CD8-positive, alpha-beta memory T cell (primary cell): ENCODE measurements at regions of chr11 and their contacts with region 1.

Region 1: DNA sequence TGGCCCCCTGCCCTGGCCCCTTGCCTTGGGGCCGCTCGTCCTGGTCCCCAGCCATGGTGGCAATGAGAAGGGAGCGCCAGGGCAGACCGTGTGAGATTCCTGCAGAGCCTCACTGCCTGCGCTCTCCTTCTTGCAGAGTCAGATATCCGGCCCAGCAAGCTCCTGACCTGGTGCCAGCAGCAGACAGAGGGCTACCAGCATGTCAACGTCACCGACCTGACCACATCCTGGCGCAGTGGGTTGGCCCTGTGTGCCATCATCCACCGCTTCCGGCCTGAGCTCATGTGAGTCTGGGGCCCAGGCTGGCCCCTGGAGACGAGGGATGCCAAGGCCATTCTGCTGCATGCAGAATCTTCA is 114.1 kb downstream of the MICAL2 start:
- DNase-seq: peak; percentile 84 to 96 (median 86)
- H3K4me3 ChIP-seq: peak overlapping the region; percentile 28
- H3K4me3 Mint-ChIP-seq: peak overlapping the region; percentile 74 to 89 (median 81)
- H3K27ac ChIP-seq: peak overlapping the region; percentile 72
- H3K27ac Mint-ChIP-seq: peak overlapping the region; percentile 94 to 100 (median 98)
- H3K4me1 ChIP-seq: peaks cover 47% of the 10 kb centered on the region
- H3K4me1 Mint-ChIP-seq: peaks cover 47 to 61% (median 53%) of the 10 kb centered on the region in 3 donors
- H3K27me3 ChIP-seq: no peaks in the 10 kb centered on the region
- H3K27me3 Mint-ChIP-seq: peaks cover 0 to 5% of the 10 kb centered on the region in 2 donors

Region 2: DNA sequence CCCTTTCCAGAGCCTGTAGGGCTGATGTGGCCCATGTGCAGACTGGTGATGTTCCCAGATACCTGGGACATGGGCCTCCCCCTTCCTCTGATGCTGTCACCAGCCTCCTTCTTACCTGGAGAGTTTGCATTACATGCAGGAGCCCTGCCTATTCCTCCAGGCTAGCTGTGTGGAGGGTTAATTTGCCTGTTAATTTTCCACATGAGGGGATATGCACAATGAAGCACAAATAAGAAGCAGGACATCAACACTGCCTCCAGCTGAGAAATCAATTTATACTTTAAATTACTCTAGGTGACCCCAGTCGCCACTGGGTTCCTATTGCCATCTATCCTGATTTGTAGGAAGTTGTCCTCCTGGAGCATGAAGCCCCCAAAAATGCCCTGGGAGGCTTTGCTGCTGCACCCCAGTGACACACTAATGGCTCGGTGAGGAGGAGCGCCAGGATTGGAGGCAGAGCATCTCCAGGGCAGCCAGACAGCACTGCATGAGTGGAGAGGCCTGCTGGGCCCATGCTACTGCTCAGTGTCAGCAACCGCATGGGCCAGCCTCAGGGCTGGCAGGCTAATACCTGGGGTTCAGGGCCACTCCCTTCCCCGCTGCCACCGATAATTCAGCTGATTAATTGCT is 484.3 kb before region 1 on chr11:
- CTCF ChIA-PET with region 1: no interaction called
- POLR2A ChIA-PET with region 1: no interaction called
- DNase-seq: no peak
- H3K4me3 ChIP-seq: no peak overlapping the region
- H3K4me3 Mint-ChIP-seq: no peak overlapping the region
- H3K27ac ChIP-seq: no peak overlapping the region
- H3K27ac Mint-ChIP-seq: no peak overlapping the region
- H3K4me1 ChIP-seq: no peaks in the 10 kb centered on the region
- H3K4me1 Mint-ChIP-seq: no peaks in the 10 kb centered on the region
- H3K27me3 ChIP-seq: no peaks in the 10 kb centered on the region
- H3K27me3 Mint-ChIP-seq: peaks cover 10 to 56% of the 10 kb centered on the region in 2 donors

Region 3: GRCh38 chr11:12066799-12067508 is 157.6 kb before region 1 on chr11:
- CTCF ChIA-PET with region 1: no interaction called
- POLR2A ChIA-PET with region 1: no interaction called
- DNase-seq: no peak
- H3K4me3 ChIP-seq: no peak overlapping the region
- H3K4me3 Mint-ChIP-seq: no peak overlapping the region
- H3K27ac ChIP-seq: no peak overlapping the region
- H3K27ac Mint-ChIP-seq: peak overlapping the region in 1 of 8 donors; percentile 77
- H3K4me1 ChIP-seq: no peaks in the 10 kb centered on the region
- H3K4me1 Mint-ChIP-seq: peaks cover 17 to 23% (median 20%) of the 10 kb centered on the region in 3 donors
- H3K27me3 ChIP-seq: no peaks in the 10 kb centered on the region
- H3K27me3 Mint-ChIP-seq: peaks cover 4 to 5% of the 10 kb centered on the region in 2 donors

Region 4: DNA sequence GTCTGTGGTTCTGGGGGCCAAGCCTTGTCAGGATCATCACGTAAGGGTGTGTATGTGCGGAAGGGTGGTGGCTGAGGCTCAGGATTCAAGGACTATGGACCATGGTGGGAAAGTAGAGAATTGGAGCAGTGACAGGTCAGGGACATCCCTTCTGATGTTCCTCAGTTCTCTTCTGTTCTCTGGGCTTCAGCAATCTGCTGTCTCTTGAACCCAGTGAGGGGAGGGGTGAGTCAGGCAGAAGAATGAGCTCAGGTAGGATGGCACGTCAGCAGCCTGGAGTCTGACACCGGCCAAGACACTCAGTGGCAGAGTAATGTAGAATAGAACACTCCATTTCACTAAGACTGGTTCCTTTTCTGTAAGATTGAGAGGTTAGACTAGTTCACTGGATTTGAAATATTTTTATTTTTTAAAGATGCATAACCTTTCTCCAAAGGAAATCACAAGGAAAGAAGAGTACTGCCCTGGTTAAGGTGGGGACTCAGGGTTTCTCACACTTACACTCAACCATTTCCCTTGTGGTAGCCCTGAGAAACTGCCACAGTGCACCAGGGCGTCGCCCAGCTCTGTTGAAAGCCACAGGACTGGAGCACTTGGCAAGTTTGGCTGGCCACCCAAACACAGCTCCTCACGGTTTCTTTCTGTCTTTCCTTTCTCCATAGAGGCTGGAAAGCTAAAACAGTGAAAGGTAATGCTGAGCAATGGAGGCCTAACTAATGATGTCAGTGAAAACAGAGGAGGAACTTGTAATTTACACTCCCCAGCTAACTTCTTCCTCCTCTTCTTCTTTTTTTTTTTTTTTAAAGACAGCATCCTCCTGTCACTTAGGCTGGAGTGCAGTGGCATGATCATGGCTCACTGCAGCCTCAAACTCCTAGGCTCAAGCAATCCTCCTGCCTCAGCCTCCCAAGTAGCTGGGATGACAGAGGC is 137.2 kb before region 1 on chr11:
- CTCF ChIA-PET with region 1: interaction called, 13 read pairs
- POLR2A ChIA-PET with region 1: interaction called, 3 read pairs
- DNase-seq: peak; percentile 16 to 72 (median 44)
- H3K4me3 ChIP-seq: peak overlapping the region; percentile 19
- H3K4me3 Mint-ChIP-seq: peak overlapping the region; percentile 48 to 92 (median 78)
- H3K27ac ChIP-seq: no peak overlapping the region
- H3K27ac Mint-ChIP-seq: peak overlapping the region; percentile 66 to 94 (median 90)
- H3K4me1 ChIP-seq: peaks cover 66% of the 10 kb centered on the region
- H3K4me1 Mint-ChIP-seq: peaks cover 74 to 81% (median 80%) of the 10 kb centered on the region in 3 donors
- H3K27me3 ChIP-seq: no peaks in the 10 kb centered on the region
- H3K27me3 Mint-ChIP-seq: no peaks in the 10 kb centered on the region

Region 5: GRCh38 chr11:12167098-12168000 is 57.2 kb before region 1 on chr11:
- CTCF ChIA-PET with region 1: no interaction called
- POLR2A ChIA-PET with region 1: no interaction called
- DNase-seq: no peak
- H3K4me3 ChIP-seq: no peak overlapping the region
- H3K4me3 Mint-ChIP-seq: no peak overlapping the region
- H3K27ac ChIP-seq: no peak overlapping the region
- H3K27ac Mint-ChIP-seq: peak overlapping the region in 1 of 8 donors; percentile 57
- H3K4me1 ChIP-seq: no peaks in the 10 kb centered on the region
- H3K4me1 Mint-ChIP-seq: peaks cover 0 to 16% (median 0%) of the 10 kb centered on the region in 3 donors
- H3K27me3 ChIP-seq: no peaks in the 10 kb centered on the region
- H3K27me3 Mint-ChIP-seq: no peaks in the 10 kb centered on the region

Region 6: DNA sequence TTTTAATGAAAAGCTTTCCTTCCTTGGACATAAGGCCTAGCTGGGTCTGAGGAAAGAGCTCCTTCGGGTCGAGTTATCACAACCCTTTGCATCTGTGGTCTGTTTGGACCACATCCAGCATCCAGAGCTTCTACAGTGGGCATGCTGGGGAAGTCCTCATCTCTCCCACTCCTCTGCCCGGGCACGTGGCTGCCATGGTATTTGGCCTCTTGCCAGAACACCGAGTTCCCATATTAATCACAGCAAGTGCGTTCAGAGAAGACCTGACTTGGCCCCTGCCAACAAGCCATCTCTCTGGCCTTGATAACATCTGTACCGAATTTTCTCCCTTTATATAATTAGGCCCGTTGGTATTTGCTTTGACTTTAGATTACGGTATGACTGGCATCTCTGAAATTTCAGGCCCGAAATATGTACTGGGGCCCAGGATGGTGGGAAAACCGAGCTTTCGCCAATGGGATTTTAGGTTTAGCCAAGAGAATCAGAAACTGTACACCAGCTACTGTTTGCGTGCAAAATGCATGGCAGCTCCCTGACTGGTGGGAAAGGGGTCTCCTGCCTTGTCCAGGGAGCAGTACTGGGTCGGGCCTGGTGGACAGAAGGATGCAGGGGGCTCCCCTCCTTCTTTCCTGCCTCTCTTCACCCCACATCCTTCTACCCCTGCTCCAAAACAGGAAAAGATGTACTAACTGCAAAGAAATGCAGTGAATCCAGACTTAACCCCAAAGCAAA is 24.1 kb before region 1 on chr11:
- CTCF ChIA-PET with region 1: interaction called, 19 read pairs
- POLR2A ChIA-PET with region 1: interaction called, 21 read pairs
- DNase-seq: no peak
- H3K4me3 ChIP-seq: no peak overlapping the region
- H3K4me3 Mint-ChIP-seq: peak overlapping the region in 2 of 7 donors; percentile 33 to 92
- H3K27ac ChIP-seq: peak overlapping the region; percentile 62
- H3K27ac Mint-ChIP-seq: peak overlapping the region; percentile 30 to 99 (median 92)
- H3K4me1 ChIP-seq: peaks cover 53% of the 10 kb centered on the region
- H3K4me1 Mint-ChIP-seq: peaks cover 56 to 70% (median 65%) of the 10 kb centered on the region in 3 donors
- H3K27me3 ChIP-seq: no peaks in the 10 kb centered on the region
- H3K27me3 Mint-ChIP-seq: peaks cover 0 to 1% of the 10 kb centered on the region in 2 donors

Region 7: GRCh38 chr11:12281571-12282478 is 57.3 kb after region 1 on chr11:
- CTCF ChIA-PET with region 1: interaction called, 20 read pairs
- POLR2A ChIA-PET with region 1: no interaction called
- DNase-seq: peak; percentile 62 to 84 (median 68)
- H3K4me3 ChIP-seq: no peak overlapping the region
- H3K4me3 Mint-ChIP-seq: no peak overlapping the region
- H3K27ac ChIP-seq: no peak overlapping the region
- H3K27ac Mint-ChIP-seq: peak overlapping the region in 1 of 8 donors; percentile 47
- H3K4me1 ChIP-seq: peaks cover 5% of the 10 kb centered on the region
- H3K4me1 Mint-ChIP-seq: no peaks in the 10 kb centered on the region
- H3K27me3 ChIP-seq: no peaks in the 10 kb centered on the region
- H3K27me3 Mint-ChIP-seq: no peaks in the 10 kb centered on the region

Region 8: GRCh38 chr11:13550761-13551160 is 1326.2 kb after region 1 on chr11:
- CTCF ChIA-PET with region 1: no interaction called
- POLR2A ChIA-PET with region 1: no interaction called
- DNase-seq: peak in 1 of 5 donors; percentile 17
- H3K4me3 ChIP-seq: no peak overlapping the region
- H3K4me3 Mint-ChIP-seq: no peak overlapping the region
- H3K27ac ChIP-seq: no peak overlapping the region
- H3K27ac Mint-ChIP-seq: peak overlapping the region in 1 of 8 donors; percentile 44
- H3K4me1 ChIP-seq: no peaks in the 10 kb centered on the region
- H3K4me1 Mint-ChIP-seq: peaks cover 3 to 25% (median 11%) of the 10 kb centered on the region in 3 donors
- H3K27me3 ChIP-seq: no peaks in the 10 kb centered on the region
- H3K27me3 Mint-ChIP-seq: peaks cover 0 to 10% of the 10 kb centered on the region in 2 donors